ENCODE measurements at regions of chr1 and their contacts with region 1.

Region 1: GRCh38 chr1:180521474-180522207 is 19.3 kb upstream of the ACBD6 start:
- DNase-seq: peak; percentile 84 to 87
- H3K4me3 ChIP-seq: no peak overlapping the region
- H3K4me3 Mint-ChIP-seq: peak overlapping the region; percentile 69
- H3K27ac Mint-ChIP-seq: peak overlapping the region; percentile 70
- H3K4me1 ChIP-seq: peaks cover 51% of the 10 kb centered on the region
- H3K4me1 Mint-ChIP-seq: peaks cover 68% of the 10 kb centered on the region
- H3K27me3 ChIP-seq: no peaks in the 10 kb centered on the region
- H3K27me3 Mint-ChIP-seq: no peaks in the 10 kb centered on the region
- CTCF ChIP-seq: no peak

Region 2: DNA sequence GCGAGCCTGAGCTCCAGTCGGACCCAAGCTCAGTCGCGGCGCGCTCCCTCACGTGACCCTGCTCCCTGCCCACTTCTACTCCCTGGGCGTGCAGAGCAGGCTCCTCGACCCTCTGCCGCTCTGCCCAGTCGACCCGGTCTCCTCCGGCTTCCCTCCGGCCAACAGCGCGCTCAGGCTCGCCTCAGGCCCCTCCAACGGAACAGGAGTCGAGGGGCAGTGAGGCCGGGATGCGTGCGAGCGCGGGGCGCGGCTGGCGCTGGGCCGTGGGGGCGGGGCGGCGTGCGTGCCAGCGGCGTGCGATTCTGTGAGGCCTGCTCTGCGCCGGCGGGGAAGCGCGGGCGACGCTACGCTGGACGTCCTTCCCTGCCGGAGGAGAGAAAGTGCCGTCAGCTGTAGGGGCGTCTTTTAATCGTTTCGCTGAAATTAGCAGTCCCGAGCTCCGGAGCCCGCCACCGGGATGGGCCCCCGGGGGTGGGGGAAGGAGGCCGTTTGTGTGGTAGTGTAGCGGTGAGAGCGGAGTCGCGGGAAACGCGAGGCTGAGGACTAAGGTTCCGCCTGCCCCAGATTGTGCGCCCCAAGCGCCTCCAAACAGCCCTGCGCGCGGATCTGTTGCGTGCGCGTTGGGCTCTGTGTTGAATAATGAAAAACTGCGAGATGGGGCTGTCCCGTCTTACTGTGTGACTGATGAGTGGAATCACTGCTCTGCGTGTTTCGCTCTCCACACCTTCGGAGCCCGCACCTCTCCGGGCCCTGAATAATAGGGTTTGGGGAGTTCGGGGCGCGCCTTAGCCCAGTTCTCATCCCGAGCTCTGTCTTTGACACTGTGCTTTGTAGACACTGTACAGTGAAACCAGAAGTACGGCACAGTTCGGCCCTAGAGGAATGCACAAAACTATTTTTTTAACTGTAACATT is 19.0 kb before region 1 on chr1 and contains the start of gene ACBD6:
- CTCF ChIA-PET with region 1: interaction called, 3 read pairs
- POLR2A ChIA-PET with region 1: interaction called, 15 read pairs
- intact Hi-C with region 1: loop called (anchors 1 kb)
- DNase-seq: peak; percentile 86 to 91
- H3K4me3 ChIP-seq: peak within 1 kb of the TSS; percentile 67
- H3K4me3 Mint-ChIP-seq: peak within 1 kb of the TSS; percentile 96
- H3K27ac Mint-ChIP-seq: peak within 1 kb of the TSS; percentile 96
- H3K4me1 ChIP-seq: peaks cover 7% of the 10 kb centered on the region; the same call in 1 of the 2 replicates
- H3K4me1 Mint-ChIP-seq: no peaks in the 10 kb centered on the region
- H3K27me3 ChIP-seq: no peaks in the 10 kb centered on the region
- H3K27me3 Mint-ChIP-seq: no peaks in the 10 kb centered on the region
- CTCF ChIP-seq: peak in 1 of 2 experiments; percentile 17
- total RNA-seq, gene ACBD6: 74.7 and 75.6 TPM in 2 replicates

Measured in Caco-2 (cell line).